Activated CD4-positive, alpha-beta memory T cell treated with anti-CD3 and anti-CD28 coated beads for 36 hours (primary cell): ENCODE measurements at regions of chr7 and their contacts with region 1.

Region 1: GRCh38 chr7:55572378-55573233 is at the start of gene VOPP1:
- DNase-seq: peak; percentile 66
- H3K4me3 Mint-ChIP-seq: peak within 1 kb of the TSS; percentile 89
- H3K27ac Mint-ChIP-seq: peak within 1 kb of the TSS; percentile 93
- H3K4me1 Mint-ChIP-seq: peaks cover 67% of the 10 kb centered on the region
- H3K27me3 Mint-ChIP-seq: no peaks in the 10 kb centered on the region
- total RNA-seq, gene VOPP1: 64.9 to 67.2 TPM

Region 2: GRCh38 chr7:55085511-55086412 is 486.8 kb before region 1 on chr7:
- CTCF ChIA-PET with region 1: no interaction called
- POLR2A ChIA-PET with region 1: no interaction called
- intact Hi-C with region 1: no loop called
- DNase-seq: no peak
- H3K4me3 Mint-ChIP-seq: no peak overlapping the region
- H3K27ac Mint-ChIP-seq: no peak overlapping the region
- H3K4me1 Mint-ChIP-seq: peaks cover 11% of the 10 kb centered on the region
- H3K27me3 Mint-ChIP-seq: peaks cover 12% of the 10 kb centered on the region

Region 3: GRCh38 chr7:55309040-55309991 is 263.3 kb before region 1 on chr7:
- CTCF ChIA-PET with region 1: no interaction called
- POLR2A ChIA-PET with region 1: interaction called, 9 read pairs
- intact Hi-C with region 1: loop called (anchors 1 kb)
- DNase-seq: peak; percentile 95
- H3K4me3 Mint-ChIP-seq: peak overlapping the region; percentile 16
- H3K27ac Mint-ChIP-seq: peak overlapping the region; percentile 90
- H3K4me1 Mint-ChIP-seq: peaks cover 43% of the 10 kb centered on the region
- H3K27me3 Mint-ChIP-seq: peaks cover 25% of the 10 kb centered on the region

Region 4: GRCh38 chr7:55515569-55516279 is 56.9 kb before region 1 on chr7:
- CTCF ChIA-PET with region 1: no interaction called
- POLR2A ChIA-PET with region 1: interaction called, 5 read pairs
- intact Hi-C with region 1: loop called (anchors 1 kb)
- DNase-seq: peak; percentile 53
- H3K4me3 Mint-ChIP-seq: peak overlapping the region; percentile 18
- H3K27ac Mint-ChIP-seq: peak overlapping the region; percentile 74
- H3K4me1 Mint-ChIP-seq: peaks cover 82% of the 10 kb centered on the region
- H3K27me3 Mint-ChIP-seq: no peaks in the 10 kb centered on the region

Region 5: GRCh38 chr7:55593515-55594318 is 21.1 kb after region 1 on chr7:
- CTCF ChIA-PET with region 1: interaction called, 10 read pairs
- POLR2A ChIA-PET with region 1: interaction called, 4 read pairs
- intact Hi-C with region 1: no loop called
- DNase-seq: peak; percentile 84
- H3K4me3 Mint-ChIP-seq: no peak overlapping the region
- H3K27ac Mint-ChIP-seq: no peak overlapping the region
- H3K4me1 Mint-ChIP-seq: peaks cover 11% of the 10 kb centered on the region
- H3K27me3 Mint-ChIP-seq: peaks cover 2% of the 10 kb centered on the region

Region 6: DNA sequence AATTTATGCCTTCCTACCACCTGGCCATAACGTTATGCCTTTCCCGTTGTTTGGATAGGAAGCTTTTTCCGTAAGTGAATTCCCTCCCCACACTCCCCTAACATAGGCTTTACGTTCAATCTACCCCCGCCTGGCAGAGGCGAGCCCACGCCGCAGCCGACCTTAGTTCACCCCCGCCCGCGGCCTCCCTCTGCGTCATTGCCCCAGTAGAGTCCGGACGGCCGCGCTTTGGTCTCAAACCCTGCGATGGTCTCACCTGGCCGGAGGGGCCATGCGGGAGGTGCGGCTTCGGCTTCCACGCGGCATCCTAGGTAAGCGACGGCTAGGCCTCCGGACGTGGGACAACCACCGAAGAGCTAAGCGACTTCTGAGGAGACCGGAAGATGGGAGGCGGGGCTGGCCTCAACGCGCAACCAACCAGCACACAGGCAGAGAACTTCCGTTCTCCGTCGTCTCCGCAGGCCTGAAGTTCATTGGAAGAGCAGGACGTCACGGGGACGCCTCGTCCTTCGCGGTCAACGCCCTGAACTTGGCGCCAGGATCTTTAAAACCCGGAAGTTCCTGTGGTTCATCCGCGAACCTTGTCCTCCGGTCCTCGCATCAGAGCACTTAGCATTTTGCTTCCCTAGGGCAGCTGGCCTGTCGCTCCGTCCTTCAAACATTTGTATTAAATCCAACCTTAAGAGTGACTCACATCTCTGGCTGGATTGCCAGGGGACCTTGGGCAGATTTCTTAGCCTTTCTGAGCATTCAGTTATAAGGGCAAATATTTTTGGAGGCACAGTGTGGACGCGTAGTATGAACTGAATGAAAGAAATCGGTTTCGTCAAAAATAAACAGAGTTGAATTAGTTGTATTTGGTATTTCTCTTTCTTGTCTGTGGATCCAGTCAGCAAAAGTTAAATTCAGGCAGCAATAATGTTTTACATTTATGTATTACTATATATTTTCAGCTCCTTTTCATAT is 533.8 kb after region 1 on chr7 and contains the start of gene CHCHD2:
- CTCF ChIA-PET with region 1: no interaction called
- POLR2A ChIA-PET with region 1: no interaction called
- intact Hi-C with region 1: loop called (anchors 5 kb)
- DNase-seq: peak; percentile 97
- H3K4me3 Mint-ChIP-seq: peak within 1 kb of the TSS; percentile 97
- H3K27ac Mint-ChIP-seq: peak within 1 kb of the TSS; percentile 94
- H3K4me1 Mint-ChIP-seq: peaks cover 30% of the 10 kb centered on the region
- H3K27me3 Mint-ChIP-seq: no peaks in the 10 kb centered on the region
- total RNA-seq, gene CHCHD2: 764 to 766 TPM